Dorsolateral prefrontal cortex (tissue), 120 donors: ENCODE measurements at regions of chrX and their contacts with region 1.

Region 1: DNA sequence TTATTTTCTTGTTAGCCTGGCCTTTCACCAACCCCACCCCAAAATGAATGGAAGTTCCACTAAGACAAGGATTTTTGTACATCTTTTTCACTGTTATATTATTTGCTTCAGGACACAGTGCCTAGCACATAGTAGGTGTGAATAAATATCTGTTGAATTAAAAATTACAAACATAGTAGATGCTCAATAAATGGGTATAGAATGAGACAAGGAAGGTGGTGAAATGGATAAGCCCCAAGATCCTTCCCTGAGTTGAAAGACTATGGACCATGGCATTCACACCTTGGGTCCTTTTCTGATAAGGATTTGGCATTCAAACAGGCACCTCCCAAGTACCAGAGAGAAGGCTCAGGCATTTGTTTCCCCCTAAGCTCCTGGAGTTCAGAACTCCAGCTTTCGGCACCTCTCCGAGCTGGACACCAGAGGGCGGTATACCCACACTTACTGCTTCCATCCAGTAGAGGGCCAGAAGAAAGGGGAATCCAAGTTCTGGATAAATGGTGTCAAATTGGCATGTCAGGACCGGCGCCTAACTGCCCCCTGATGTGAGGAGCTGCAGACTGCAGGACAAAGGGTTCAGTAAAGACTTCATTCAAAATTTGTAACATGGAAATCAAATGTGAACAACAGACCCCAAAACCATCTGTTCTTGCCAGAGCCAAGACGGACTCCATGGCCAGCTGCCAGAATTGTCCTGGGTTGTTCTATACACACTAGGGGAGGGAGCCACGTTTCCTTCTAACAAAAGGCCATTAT is 193.0 kb downstream of the GPC3 start:
- DNase-seq: peak; percentile 17 to 83 (median 68)
- H3K4me3 ChIP-seq: peak overlapping the region in 36 of 59 donors; percentile 4 to 53 (median 29)
- H3K27ac ChIP-seq: peak overlapping the region in 5 of 59 donors; percentile 3 to 50 (median 23)
- H3K27me3 ChIP-seq: peaks cover 0 to 75% (median 25%) of the 10 kb centered on the region in 45 donors
- CTCF ChIP-seq: peak; percentile 61 to 99 (median 94)

Region 2: GRCh38 chrX:133838761-133839676 is 46.6 kb after region 1 on chrX:
- intact Hi-C with region 1: loop called in 1 of 2 experiments (anchors 2 kb)
- DNase-seq: no peak
- H3K4me3 ChIP-seq: no peak overlapping the region
- H3K27ac ChIP-seq: no peak overlapping the region
- H3K27me3 ChIP-seq: peaks cover 0 to 74% (median 22%) of the 10 kb centered on the region in 45 donors
- CTCF ChIP-seq: peak in 54 of 56 donors; percentile 26 to 72 (median 54)

Region 3: DNA sequence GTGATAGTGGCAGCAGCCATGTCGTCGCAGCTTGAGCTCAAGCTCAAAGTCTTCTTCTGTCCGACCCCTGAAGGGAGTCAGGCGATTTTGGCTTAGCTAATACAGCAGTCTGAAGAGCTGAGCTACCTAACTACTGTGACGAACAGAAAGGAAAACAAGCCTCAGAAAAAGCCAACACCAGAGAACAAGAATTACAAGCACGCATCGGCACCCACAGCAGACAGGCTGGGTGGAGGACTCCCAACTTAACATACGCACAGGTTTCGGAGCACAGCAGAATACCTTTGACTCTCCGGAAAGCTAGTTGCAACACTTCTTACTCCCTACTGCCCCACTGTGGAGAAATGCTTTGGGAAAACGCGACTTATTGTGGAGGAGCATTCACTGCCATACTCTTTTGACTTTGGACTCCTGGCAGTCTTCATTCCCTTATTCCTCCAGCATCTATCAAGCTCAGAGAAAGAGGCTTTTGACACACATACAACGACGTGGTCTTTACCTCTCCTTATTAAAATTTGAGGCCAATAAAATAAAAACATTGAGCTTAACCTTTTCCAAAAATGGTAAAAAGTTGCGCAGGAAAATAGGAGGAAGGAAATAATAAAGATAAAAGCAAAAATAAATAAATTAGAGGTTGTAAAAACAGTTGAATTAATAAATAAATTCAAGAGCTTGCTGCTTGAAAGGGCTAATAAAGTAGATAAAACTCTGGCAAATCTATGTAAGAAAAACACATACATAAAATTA is 234.4 kb after region 1 on chrX:
- intact Hi-C with region 1: loop called in 1 of 2 experiments (anchors 5 kb)
- DNase-seq: peak in 1 of 10 donors; percentile 21
- H3K4me3 ChIP-seq: peak overlapping the region in 31 of 59 donors; percentile 5 to 56 (median 34)
- H3K27ac ChIP-seq: no peak overlapping the region
- H3K27me3 ChIP-seq: peaks cover 0 to 88% (median 34%) of the 10 kb centered on the region in 45 donors
- CTCF ChIP-seq: peak in 51 of 56 donors; percentile 18 to 62 (median 41)

Region 4: DNA sequence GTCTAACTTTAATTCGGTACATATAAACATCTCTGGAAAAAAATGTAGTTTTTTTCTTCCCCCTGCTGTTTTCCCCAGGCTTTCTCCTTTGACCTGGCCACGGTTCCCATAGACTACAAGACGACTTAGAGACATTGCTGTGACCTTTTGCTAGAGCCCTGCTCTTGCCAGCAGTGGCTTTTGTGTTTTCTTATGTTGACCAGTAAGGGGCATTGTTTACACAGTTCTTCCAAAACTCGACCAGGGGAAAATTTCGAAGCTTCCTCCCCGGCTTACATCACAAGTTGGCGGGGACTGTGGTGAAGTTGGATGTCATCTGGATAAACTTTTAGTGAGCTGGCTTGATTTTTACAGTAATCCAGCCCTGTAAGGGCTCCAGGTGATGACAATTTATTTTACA is 453.9 kb after region 1 on chrX:
- intact Hi-C with region 1: loop called in 1 of 2 experiments (anchors 5 kb)
- DNase-seq: no peak
- H3K4me3 ChIP-seq: no peak overlapping the region
- H3K27ac ChIP-seq: no peak overlapping the region
- H3K27me3 ChIP-seq: peaks cover 0 to 58% (median 19%) of the 10 kb centered on the region in 45 donors
- CTCF ChIP-seq: peak in 35 of 56 donors; percentile 7 to 62 (median 30)

Region 5: GRCh38 chrX:134396174-134396573 is 603.8 kb after region 1 on chrX:
- intact Hi-C with region 1: loop called (anchors 5 to 10 kb)
- DNase-seq: no peak
- H3K4me3 ChIP-seq: no peak overlapping the region
- H3K27ac ChIP-seq: no peak overlapping the region
- H3K27me3 ChIP-seq: peaks cover 0 to 54% (median 8%) of the 10 kb centered on the region in 45 donors
- CTCF ChIP-seq: peak; percentile 34 to 83 (median 70)